CD4-positive, alpha-beta memory T cell (primary cell): ENCODE measurements at regions of chr13 and their contacts with region 1.

Region 1: GRCh38 chr13:27281420-27281819 is 10.8 kb downstream of the RASL11A start:
- DNase-seq: no peak
- H3K4me3 ChIP-seq: no peak overlapping the region
- H3K4me3 Mint-ChIP-seq: no peak overlapping the region
- H3K27ac ChIP-seq: no peak overlapping the region
- H3K27ac Mint-ChIP-seq: no peak overlapping the region
- H3K4me1 ChIP-seq: no peaks in the 10 kb centered on the region
- H3K4me1 Mint-ChIP-seq: no peaks in the 10 kb centered on the region
- H3K27me3 ChIP-seq: no peaks in the 10 kb centered on the region
- H3K27me3 Mint-ChIP-seq: peaks cover 1 to 5% of the 10 kb centered on the region in 2 donors

Region 2: GRCh38 chr13:27236478-27236877 is 44.9 kb before region 1 on chr13:
- CTCF ChIA-PET with region 1: no interaction called
- POLR2A ChIA-PET with region 1: no interaction called
- intact Hi-C with region 1: no loop called
- DNase-seq: no peak
- H3K4me3 ChIP-seq: no peak overlapping the region
- H3K4me3 Mint-ChIP-seq: no peak overlapping the region
- H3K27ac ChIP-seq: no peak overlapping the region
- H3K27ac Mint-ChIP-seq: no peak overlapping the region
- H3K4me1 ChIP-seq: no peaks in the 10 kb centered on the region
- H3K4me1 Mint-ChIP-seq: no peaks in the 10 kb centered on the region
- H3K27me3 ChIP-seq: no peaks in the 10 kb centered on the region
- H3K27me3 Mint-ChIP-seq: peaks cover 0 to 2% of the 10 kb centered on the region in 2 donors

Region 3: GRCh38 chr13:27270594-27271520 is 10.6 kb before region 1 on chr13 and contains the start of gene RASL11A:
- CTCF ChIA-PET with region 1: interaction called, 11 read pairs
- POLR2A ChIA-PET with region 1: no interaction called
- intact Hi-C with region 1: no loop called
- DNase-seq: peak; percentile 62 to 76 (median 69)
- H3K4me3 ChIP-seq: peak within 1 kb of the TSS; percentile 58 to 73
- H3K4me3 Mint-ChIP-seq: peak within 1 kb of the TSS; percentile 87 to 93 (median 90)
- H3K27ac ChIP-seq: peak within 1 kb of the TSS; percentile 52
- H3K27ac Mint-ChIP-seq: peak within 1 kb of the TSS in 6 of 7 donors; percentile 25 to 84 (median 70)
- H3K4me1 ChIP-seq: peaks cover 8% of the 10 kb centered on the region
- H3K4me1 Mint-ChIP-seq: peaks cover 7 to 13% (median 11%) of the 10 kb centered on the region in 4 donors
- H3K27me3 ChIP-seq: peaks cover 6% of the 10 kb centered on the region
- H3K27me3 Mint-ChIP-seq: peaks cover 10 to 18% of the 10 kb centered on the region in 2 donors
- total RNA-seq, gene RASL11A: 0.78 to 0.96 TPM